ENCODE measurements at regions of chr17 and their contacts with region 1.

Region 1: GRCh38 chr17:21252796-21253645 is at the start of gene NATD1:
- DNase-seq: peak; percentile 98
- H3K4me3 ChIP-seq: peak within 1 kb of the TSS; percentile 63 to 90 (median 75)
- H3K27ac ChIP-seq: peak within 1 kb of the TSS; percentile 64 to 79 (median 77)
- H3K4me1 ChIP-seq: peaks cover 41 to 51% (median 44%) of the 10 kb centered on the region in 4 donors
- H3K27me3 ChIP-seq: no peaks in the 10 kb centered on the region
- CTCF ChIP-seq: peak in 1 of 3 experiments; percentile 8
- EP300 ChIP-seq: no peak
- POLR2A ChIP-seq: no peak
- total RNA-seq, gene NATD1: 12.3 to 26.2 (median 18.1) TPM

Region 2: DNA sequence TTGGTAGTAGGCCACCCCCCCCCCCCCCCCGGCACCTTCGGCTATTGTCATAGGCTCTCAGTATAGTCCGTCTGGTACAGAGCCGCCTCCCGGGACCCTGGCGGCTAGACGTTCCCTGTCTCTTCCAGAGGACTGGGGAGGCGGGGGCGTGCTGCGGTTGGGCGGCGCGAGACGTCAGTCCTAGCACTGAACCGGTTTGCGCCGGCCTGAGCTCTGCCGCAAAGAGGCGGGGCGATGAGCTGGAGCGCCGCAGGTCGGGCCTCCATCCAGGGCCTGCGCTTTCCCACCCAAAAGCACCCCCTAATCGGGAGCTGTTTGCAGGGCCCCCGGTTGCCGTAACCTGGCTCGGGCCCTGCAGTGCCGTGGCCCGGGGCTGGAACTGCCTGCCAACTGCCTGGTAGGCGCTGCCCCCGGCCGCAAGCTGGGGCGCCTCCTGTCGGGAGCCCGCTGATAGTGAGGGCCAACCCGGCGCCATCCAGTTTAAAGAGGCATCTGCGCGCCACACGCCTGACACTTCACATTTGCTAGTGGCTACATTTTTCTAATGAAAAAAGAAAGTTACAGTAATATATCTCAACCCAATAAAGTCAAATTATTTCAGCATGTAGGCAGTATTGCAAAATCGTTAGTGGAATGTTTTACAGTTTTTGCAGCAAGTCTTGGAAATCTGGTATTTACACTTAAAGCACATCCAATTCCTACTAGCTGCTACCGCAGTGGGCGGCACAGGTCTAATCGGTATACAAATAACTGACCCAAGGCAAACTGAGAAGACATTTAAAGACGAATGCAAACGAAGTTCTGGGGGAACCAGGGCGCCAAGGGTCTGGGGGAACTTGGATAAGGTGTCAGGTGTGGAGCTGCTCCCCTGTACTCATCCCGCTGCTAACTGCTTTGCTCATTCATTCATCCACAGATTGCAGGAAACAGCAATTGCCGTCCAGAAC is 209.5 kb before region 1 on chr17:
- intact Hi-C with region 1: loop called (anchors 10 kb)
- DNase-seq: peak; percentile 99
- H3K4me3 ChIP-seq: peak overlapping the region; percentile 54 to 100 (median 90)
- H3K27ac ChIP-seq: peak overlapping the region; percentile 93 to 100 (median 100)
- H3K4me1 ChIP-seq: peaks cover 24 to 39% (median 37%) of the 10 kb centered on the region in 4 donors
- H3K27me3 ChIP-seq: no peaks in the 10 kb centered on the region
- CTCF ChIP-seq: peak; percentile 88 to 96 (median 92)
- EP300 ChIP-seq: no peak
- POLR2A ChIP-seq: no peak

Region 3: GRCh38 chr17:21214015-21214776 is 38.8 kb before region 1 on chr17 and contains the start of gene TMEM11:
- intact Hi-C with region 1: loop called (anchors 2 kb)
- DNase-seq: peak; percentile 98
- H3K4me3 ChIP-seq: peak within 1 kb of the TSS; percentile 90 to 97 (median 95)
- H3K27ac ChIP-seq: peak within 1 kb of the TSS; percentile 89 to 96 (median 92)
- H3K4me1 ChIP-seq: peaks cover 51 to 71% (median 56%) of the 10 kb centered on the region in 4 donors
- H3K27me3 ChIP-seq: peaks cover 0 to 7% (median 0%) of the 10 kb centered on the region in 4 donors
- CTCF ChIP-seq: no peak
- EP300 ChIP-seq: no peak
- POLR2A ChIP-seq: peak; percentile 81
- total RNA-seq, gene TMEM11: 24.1 to 31.0 (median 26.0) TPM

Region 4: DNA sequence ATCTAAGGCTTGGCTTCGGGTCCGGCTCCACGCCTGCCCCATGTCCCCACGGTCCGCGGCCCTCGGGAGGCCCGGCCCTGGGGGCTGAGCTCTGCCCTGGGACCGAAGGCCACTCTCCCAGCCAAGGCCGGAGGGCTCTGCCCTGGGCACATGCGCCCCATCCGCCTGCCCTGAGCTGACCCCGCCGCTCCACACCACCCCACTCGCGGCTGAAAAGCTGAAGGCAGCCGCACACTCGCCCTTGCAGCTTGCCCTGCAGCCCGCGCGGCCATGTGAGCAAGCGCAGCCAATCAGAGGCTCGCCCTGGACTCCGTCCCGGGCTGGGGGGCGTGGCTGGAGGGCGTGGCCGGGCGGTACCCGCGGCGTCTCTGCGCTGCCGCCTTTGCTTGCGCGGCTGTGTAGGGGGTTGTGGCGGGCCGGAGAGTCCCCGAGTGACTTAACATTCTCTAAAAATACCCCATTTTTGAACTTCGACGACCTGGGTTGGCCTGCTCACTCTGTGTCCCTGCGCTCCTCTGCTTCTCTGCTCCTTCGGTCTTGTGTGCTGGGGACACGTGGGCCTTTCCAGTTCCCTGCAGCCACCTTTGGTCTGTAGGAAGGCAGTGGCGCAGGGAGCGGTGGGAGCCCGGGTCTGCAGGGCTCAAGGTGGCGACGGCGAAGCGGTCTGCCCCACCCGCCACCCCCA is 22.7 kb after region 1 on chr17:
- intact Hi-C with region 1: loop called (anchors 2 kb)
- DNase-seq: peak; percentile 96
- H3K4me3 ChIP-seq: peak overlapping the region; percentile 65 to 77 (median 73)
- H3K27ac ChIP-seq: peak overlapping the region; percentile 62 to 76 (median 68)
- H3K4me1 ChIP-seq: peaks cover 11 to 45% (median 36%) of the 10 kb centered on the region in 4 donors
- H3K27me3 ChIP-seq: no peaks in the 10 kb centered on the region
- CTCF ChIP-seq: peak in 1 of 3 experiments; percentile 12
- EP300 ChIP-seq: no peak
- POLR2A ChIP-seq: no peak

Region 5: GRCh38 chr17:21445091-21445650 is 192.2 kb after region 1 on chr17:
- intact Hi-C with region 1: no loop called
- DNase-seq: no peak
- H3K4me3 ChIP-seq: no peak overlapping the region
- H3K27ac ChIP-seq: no peak overlapping the region
- H3K4me1 ChIP-seq: no peaks in the 10 kb centered on the region
- H3K27me3 ChIP-seq: peaks cover 0 to 10% (median 0%) of the 10 kb centered on the region in 4 donors
- CTCF ChIP-seq: no peak
- EP300 ChIP-seq: no peak
- POLR2A ChIP-seq: no peak

Measured in esophagus muscularis mucosa (tissue), 4 donors.